ENCODE measurements at regions of chr2 and their contacts with region 1.

Region 1: GRCh38 chr2:191165176-191165643 is 14.4 kb upstream of the STAT4 start:
- DNase-seq: peak in 1 of 2 donors; percentile 74
- ATAC-seq: peak; percentile 74 to 91 (median 84)
- H3K4me3 ChIP-seq: no peak overlapping the region
- H3K4me3 Mint-ChIP-seq: no peak overlapping the region
- H3K27ac ChIP-seq: no peak overlapping the region
- H3K27ac Mint-ChIP-seq: no peak overlapping the region
- H3K4me1 ChIP-seq: no peaks in the 10 kb centered on the region
- H3K4me1 Mint-ChIP-seq: peaks cover 6% of the 10 kb centered on the region in 2 donors
- H3K27me3 ChIP-seq: no peaks in the 10 kb centered on the region
- H3K27me3 Mint-ChIP-seq: peaks cover 0 to 8% of the 10 kb centered on the region in 2 donors
- CTCF ChIP-seq: peak; percentile 79

Region 2: GRCh38 chr2:191265311-191266170 is 100.3 kb after region 1 on chr2:
- intact Hi-C with region 1: no loop called
- DNase-seq: no peak
- ATAC-seq: no peak
- H3K4me3 ChIP-seq: no peak overlapping the region
- H3K4me3 Mint-ChIP-seq: no peak overlapping the region
- H3K27ac ChIP-seq: no peak overlapping the region
- H3K27ac Mint-ChIP-seq: no peak overlapping the region
- H3K4me1 ChIP-seq: no peaks in the 10 kb centered on the region
- H3K4me1 Mint-ChIP-seq: no peaks in the 10 kb centered on the region
- H3K27me3 ChIP-seq: no peaks in the 10 kb centered on the region
- H3K27me3 Mint-ChIP-seq: peaks cover 12 to 19% of the 10 kb centered on the region in 2 donors
- CTCF ChIP-seq: no peak

Region 3: GRCh38 chr2:191302459-191303139 is 137.4 kb after region 1 on chr2:
- intact Hi-C with region 1: loop called (anchors 1 kb)
- DNase-seq: peak in 1 of 2 donors; percentile 61
- ATAC-seq: peak in 2 of 3 donors; percentile 53 to 65
- H3K4me3 ChIP-seq: no peak overlapping the region
- H3K4me3 Mint-ChIP-seq: no peak overlapping the region
- H3K27ac ChIP-seq: no peak overlapping the region
- H3K27ac Mint-ChIP-seq: no peak overlapping the region
- H3K4me1 ChIP-seq: no peaks in the 10 kb centered on the region
- H3K4me1 Mint-ChIP-seq: no peaks in the 10 kb centered on the region
- H3K27me3 ChIP-seq: no peaks in the 10 kb centered on the region
- H3K27me3 Mint-ChIP-seq: peaks cover 17 to 19% of the 10 kb centered on the region in 2 donors
- CTCF ChIP-seq: no peak

Region 4: GRCh38 chr2:191369036-191369435 is 203.8 kb after region 1 on chr2:
- intact Hi-C with region 1: loop called (anchors 10 kb)
- DNase-seq: peak in 1 of 2 donors; percentile 6
- ATAC-seq: no peak
- H3K4me3 ChIP-seq: no peak overlapping the region
- H3K4me3 Mint-ChIP-seq: no peak overlapping the region
- H3K27ac ChIP-seq: no peak overlapping the region
- H3K27ac Mint-ChIP-seq: no peak overlapping the region
- H3K4me1 ChIP-seq: no peaks in the 10 kb centered on the region
- H3K4me1 Mint-ChIP-seq: no peaks in the 10 kb centered on the region
- H3K27me3 ChIP-seq: no peaks in the 10 kb centered on the region
- H3K27me3 Mint-ChIP-seq: peaks cover 39 to 53% of the 10 kb centered on the region in 2 donors
- CTCF ChIP-seq: no peak

Region 5: GRCh38 chr2:191521608-191522208 is 356.5 kb after region 1 on chr2:
- intact Hi-C with region 1: loop called (anchors 1 kb)
- DNase-seq: peak in 1 of 2 donors; percentile 52
- ATAC-seq: no peak
- H3K4me3 ChIP-seq: no peak overlapping the region
- H3K4me3 Mint-ChIP-seq: no peak overlapping the region
- H3K27ac ChIP-seq: no peak overlapping the region
- H3K27ac Mint-ChIP-seq: no peak overlapping the region
- H3K4me1 ChIP-seq: no peaks in the 10 kb centered on the region
- H3K4me1 Mint-ChIP-seq: no peaks in the 10 kb centered on the region
- H3K27me3 ChIP-seq: no peaks in the 10 kb centered on the region
- H3K27me3 Mint-ChIP-seq: peaks cover 8 to 30% of the 10 kb centered on the region in 2 donors
- CTCF ChIP-seq: peak; percentile 72

Region 6: DNA sequence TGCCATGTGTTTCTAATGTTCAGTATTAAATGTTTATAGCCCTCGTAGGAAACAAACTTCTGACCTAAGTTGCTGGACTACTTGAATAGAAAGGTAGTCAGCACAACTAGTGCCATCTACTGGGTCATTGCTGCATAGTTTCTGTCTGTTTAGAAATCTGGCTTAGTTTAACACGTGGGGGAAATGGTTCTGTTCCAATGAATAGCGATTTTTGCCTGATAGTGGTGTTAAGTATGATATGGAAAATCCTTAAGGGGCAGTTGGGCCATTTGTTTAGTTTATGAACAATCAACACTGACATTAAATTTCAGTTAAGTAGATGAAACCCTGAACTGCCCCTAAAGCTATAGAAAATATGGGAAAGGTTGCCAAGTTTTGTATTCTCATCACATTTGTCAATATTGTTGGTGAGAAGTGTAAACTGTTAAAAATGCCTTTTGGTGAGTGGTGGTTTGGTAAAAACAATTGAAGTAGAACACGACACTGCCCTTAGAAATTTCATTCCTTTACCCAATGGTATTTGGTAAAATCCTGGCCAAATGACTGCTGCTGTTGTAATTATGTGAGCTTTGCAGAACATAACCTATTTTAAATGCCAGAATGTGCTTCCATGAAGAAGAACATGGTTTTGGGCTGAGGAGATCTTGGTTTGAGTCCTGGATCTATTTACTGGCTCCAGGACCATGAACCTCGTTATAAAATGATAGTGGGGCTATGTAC is 526.0 kb after region 1 on chr2:
- intact Hi-C with region 1: loop called (anchors 2 kb)
- DNase-seq: peak in 1 of 2 donors; percentile 85
- ATAC-seq: peak; percentile 87 to 97 (median 90)
- H3K4me3 ChIP-seq: no peak overlapping the region
- H3K4me3 Mint-ChIP-seq: no peak overlapping the region
- H3K27ac ChIP-seq: no peak overlapping the region
- H3K27ac Mint-ChIP-seq: peak overlapping the region; percentile 44 to 80
- H3K4me1 ChIP-seq: no peaks in the 10 kb centered on the region
- H3K4me1 Mint-ChIP-seq: peaks cover 7 to 17% of the 10 kb centered on the region in 2 donors
- H3K27me3 ChIP-seq: no peaks in the 10 kb centered on the region
- H3K27me3 Mint-ChIP-seq: peaks cover 0 to 3% of the 10 kb centered on the region in 2 donors
- CTCF ChIP-seq: peak; percentile 83

Region 7: GRCh38 chr2:192162392-192163042 is 997.3 kb after region 1 on chr2:
- intact Hi-C with region 1: loop called (anchors 1 kb)
- DNase-seq: peak; percentile 33 to 83
- ATAC-seq: peak; percentile 62 to 79 (median 69)
- H3K4me3 ChIP-seq: no peak overlapping the region
- H3K4me3 Mint-ChIP-seq: peak overlapping the region; percentile 41
- H3K27ac ChIP-seq: no peak overlapping the region
- H3K27ac Mint-ChIP-seq: no peak overlapping the region
- H3K4me1 ChIP-seq: no peaks in the 10 kb centered on the region
- H3K4me1 Mint-ChIP-seq: peaks cover 11 to 14% of the 10 kb centered on the region in 2 donors
- H3K27me3 ChIP-seq: peaks cover 2% of the 10 kb centered on the region
- H3K27me3 Mint-ChIP-seq: peaks cover 2 to 12% of the 10 kb centered on the region in 2 donors
- CTCF ChIP-seq: peak; percentile 95

Region 8: GRCh38 chr2:192407692-192408091 is 1242.5 kb after region 1 on chr2:
- intact Hi-C with region 1: no loop called
- DNase-seq: no peak
- ATAC-seq: no peak
- H3K4me3 ChIP-seq: no peak overlapping the region
- H3K4me3 Mint-ChIP-seq: no peak overlapping the region
- H3K27ac ChIP-seq: no peak overlapping the region
- H3K27ac Mint-ChIP-seq: no peak overlapping the region
- H3K4me1 ChIP-seq: no peaks in the 10 kb centered on the region
- H3K4me1 Mint-ChIP-seq: no peaks in the 10 kb centered on the region
- H3K27me3 ChIP-seq: no peaks in the 10 kb centered on the region
- H3K27me3 Mint-ChIP-seq: no peaks in the 10 kb centered on the region
- CTCF ChIP-seq: no peak